ENCODE measurements at regions of chr19 and their contacts with region 1.

Region 1: DNA sequence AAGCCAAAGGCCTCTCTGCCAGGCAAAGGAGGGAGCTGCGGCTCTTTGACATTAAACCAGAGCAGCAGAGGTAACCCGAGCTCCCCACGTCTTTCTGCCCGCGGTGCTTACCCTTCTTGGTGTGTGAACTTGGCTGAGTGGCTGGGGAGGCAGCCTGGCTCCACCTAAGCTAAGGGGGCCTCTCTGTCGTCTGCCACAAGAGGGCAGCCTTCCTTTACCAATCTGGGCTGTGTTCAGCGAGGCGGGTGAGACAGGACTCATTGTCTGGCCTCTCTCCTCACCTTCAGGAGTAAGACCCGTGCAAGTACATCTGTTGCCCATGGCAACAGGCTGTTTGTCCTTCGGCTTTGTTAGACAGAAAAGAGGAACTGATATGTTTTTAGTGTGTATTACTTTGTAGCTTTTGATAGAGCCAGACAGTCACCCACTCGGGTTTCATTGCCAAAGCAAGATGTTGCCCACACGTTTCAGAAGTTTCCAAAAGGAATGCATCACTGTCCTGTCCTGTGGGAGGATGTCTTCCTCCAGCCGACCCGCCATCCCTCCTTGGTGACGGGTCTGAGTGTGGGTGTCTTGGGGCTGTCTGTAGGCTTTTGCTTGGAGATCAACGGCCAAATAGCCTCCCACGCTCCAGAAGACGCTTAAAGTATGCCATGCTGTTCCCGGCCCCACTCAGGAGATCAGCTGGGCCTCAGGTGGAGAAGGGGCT is 4.6 kb downstream of the POP4 start:
- DNase-seq: no peak
- H3K4me3 ChIP-seq: no peak overlapping the region
- CTCF ChIP-seq: peak; percentile 93

Region 2: DNA sequence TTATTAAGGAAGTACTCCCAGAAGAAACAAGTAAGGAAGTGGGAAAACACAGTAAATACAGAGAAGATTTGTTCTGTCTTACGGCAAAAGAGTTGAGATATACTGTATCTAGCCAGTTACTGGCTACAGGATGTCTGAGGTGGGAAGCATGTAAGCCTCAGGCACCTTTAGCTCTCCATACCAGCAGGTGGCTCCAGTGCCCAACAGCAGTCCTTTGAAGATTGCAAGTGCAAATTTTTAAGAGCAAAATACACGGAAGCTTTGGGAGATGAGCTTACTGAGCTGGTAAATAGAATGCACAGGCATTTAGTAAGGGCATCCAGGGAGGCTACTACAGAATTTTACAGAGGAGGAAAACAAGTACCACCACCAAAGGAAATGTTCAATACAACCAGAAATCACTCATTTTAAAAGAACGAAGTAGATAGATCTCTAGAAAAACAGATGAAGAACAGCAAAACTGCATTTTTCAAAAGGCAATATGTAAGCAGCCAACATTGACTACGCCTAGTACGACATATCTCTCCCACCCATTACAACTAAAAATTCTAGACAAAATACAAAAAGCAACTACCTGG is 142.8 kb before region 1 on chr19:
- CTCF ChIA-PET with region 1: no interaction called
- POLR2A ChIA-PET with region 1: no interaction called
- DNase-seq: no peak
- H3K4me3 ChIP-seq: no peak overlapping the region
- CTCF ChIP-seq: peak; percentile 14

Region 3: DNA sequence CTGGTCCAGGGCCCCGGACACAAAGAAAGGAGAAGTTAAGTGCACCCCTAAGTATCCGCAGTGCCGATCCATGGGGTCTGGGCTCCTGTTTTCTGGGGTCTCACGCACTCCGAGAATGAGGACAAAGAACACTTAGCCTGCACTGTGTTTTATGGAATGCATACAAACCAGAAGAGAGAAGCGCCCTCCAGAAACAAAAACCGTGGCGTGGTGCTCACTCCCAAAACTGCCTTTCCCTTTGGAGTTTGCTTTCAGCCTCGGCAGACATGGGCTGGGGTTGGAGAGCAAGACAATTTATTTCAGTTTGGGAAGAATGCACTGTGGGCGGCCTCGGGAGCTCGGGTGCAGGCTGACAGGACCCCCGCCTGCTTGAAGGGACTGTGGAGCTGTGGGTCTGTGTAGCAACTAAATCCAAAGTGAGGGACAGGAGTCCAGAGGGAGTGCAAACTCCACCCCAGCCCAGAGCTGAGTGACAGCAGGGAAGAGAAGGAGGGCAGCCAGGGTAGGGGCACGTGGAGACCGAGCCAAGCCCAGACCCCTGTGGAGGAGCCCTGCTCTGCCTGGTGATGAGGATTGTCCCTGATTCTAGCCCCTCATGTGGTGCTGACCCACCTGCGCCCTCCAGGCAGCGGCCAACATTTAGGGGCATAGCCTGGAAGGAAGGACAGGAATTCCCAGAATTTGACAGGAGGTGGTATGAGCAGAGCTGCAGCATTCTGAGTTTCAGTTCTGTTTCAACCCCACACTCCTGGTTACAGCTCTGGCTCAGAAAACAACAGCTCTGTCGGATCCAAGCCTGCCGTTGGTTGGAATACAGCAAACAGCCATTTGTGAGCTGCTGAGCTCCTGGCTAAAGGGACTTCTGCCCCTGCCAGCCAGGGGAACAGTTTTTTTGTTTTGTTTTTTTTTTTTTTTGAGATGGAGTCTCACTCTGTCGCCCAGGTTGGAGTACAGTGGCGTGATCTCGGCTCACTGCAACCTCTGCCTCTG is 42.4 kb before region 1 on chr19:
- CTCF ChIA-PET with region 1: no interaction called
- POLR2A ChIA-PET with region 1: no interaction called
- DNase-seq: no peak
- H3K4me3 ChIP-seq: no peak overlapping the region
- CTCF ChIP-seq: no peak

Region 4: DNA sequence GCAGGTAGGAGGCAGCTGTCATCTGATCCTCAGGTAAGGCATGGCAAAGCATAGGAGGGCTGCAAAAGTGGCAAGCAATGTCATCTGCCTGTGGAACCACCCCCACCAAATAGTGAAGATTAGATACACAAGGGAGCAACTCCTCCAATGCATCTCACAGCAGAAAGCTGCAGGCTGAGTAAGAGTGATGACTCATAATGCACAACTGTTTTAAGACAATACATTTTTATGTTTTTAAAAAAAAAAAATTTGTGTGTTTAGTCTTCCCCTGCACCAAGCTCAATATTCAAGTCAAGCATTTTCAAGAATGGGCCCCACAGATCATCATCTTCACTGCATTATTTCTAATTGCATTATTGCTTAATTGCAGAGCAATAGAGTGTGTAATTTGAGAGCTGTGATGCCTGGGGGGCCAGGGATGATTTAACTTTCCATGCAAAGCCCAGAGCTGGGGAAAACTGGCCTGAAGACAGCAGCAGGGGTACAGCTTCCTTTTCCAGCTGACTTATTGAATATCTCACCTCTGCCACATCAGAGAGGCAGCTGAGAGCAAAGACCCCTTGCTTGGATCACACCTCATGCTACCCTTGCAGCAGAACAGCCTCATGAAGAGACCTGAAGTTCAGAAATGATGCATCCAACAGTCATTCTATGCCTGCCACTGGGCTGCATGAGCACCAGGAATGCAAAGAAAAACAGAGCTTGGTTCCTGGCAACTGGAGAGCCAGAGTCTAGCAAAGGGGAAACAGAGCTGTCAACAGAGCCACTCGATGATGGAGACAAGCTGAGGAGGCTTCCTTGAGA is 27.3 kb before region 1 on chr19:
- CTCF ChIA-PET with region 1: no interaction called
- POLR2A ChIA-PET with region 1: interaction called, 11 read pairs
- DNase-seq: no peak
- H3K4me3 ChIP-seq: no peak overlapping the region
- CTCF ChIP-seq: no peak

Region 5: GRCh38 chr19:29636553-29637360 is 26.0 kb after region 1 on chr19:
- CTCF ChIA-PET with region 1: interaction called, 151 read pairs
- POLR2A ChIA-PET with region 1: no interaction called
- DNase-seq: no peak
- H3K4me3 ChIP-seq: no peak overlapping the region
- CTCF ChIP-seq: no peak

Region 6: DNA sequence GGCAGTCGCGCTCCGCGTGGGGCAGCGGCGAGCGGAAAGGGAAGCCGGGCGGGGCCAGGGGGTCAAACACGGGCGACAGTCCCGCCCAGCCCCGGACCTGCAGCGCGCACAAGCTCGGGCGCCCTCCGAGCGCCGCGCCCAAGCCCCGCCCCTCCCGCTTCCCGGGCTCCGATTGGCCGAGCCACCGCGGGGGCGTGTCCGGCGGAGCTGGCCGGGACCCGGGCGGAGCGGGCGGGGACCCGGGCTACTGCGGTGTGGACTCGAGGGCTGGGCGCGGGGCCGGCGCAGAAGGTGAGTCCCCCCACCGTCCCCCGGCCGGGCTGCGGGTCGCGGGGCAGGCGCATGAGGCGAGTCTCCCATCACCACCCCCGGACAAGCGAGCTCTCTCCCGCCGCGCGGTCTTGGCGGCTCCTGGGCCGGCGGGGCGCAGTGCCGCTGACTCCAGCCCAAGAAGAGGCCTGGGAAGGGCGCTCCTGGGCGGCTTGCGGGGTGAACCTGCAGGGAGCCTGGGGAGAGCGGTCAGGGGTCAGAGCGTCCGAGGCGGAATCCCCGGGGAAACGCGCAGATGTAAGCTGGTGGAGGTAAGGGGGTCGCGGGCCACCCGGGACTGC is 54.6 kb after region 1 on chr19 and contains the start of gene PLEKHF1:
- CTCF ChIA-PET with region 1: interaction called, 140 read pairs
- POLR2A ChIA-PET with region 1: interaction called, 5 read pairs
- DNase-seq: no peak
- H3K4me3 ChIP-seq: peak within 1 kb of the TSS; percentile 82
- CTCF ChIP-seq: no peak

Region 7: GRCh38 chr19:29687244-29687896 is 76.7 kb after region 1 on chr19:
- CTCF ChIA-PET with region 1: interaction called, 159 read pairs
- POLR2A ChIA-PET with region 1: no interaction called
- DNase-seq: peak; percentile 75
- H3K4me3 ChIP-seq: peak overlapping the region; percentile 13
- CTCF ChIP-seq: no peak

Region 8: GRCh38 chr19:29714953-29715700 is 104.4 kb after region 1 on chr19 and contains the start of gene C19orf12:
- CTCF ChIA-PET with region 1: interaction called, 647 read pairs
- POLR2A ChIA-PET with region 1: interaction called, 10 read pairs
- DNase-seq: no peak
- H3K4me3 ChIP-seq: peak within 1 kb of the TSS; percentile 82
- CTCF ChIP-seq: no peak

Region 9: GRCh38 chr19:29731331-29731850 is 120.7 kb after region 1 on chr19:
- CTCF ChIA-PET with region 1: interaction called, 21 read pairs
- POLR2A ChIA-PET with region 1: no interaction called
- DNase-seq: no peak
- H3K4me3 ChIP-seq: no peak overlapping the region
- CTCF ChIP-seq: no peak